CD8-positive, alpha-beta memory T cell (primary cell): ENCODE measurements at regions of chr1 and their contacts with region 1.

Region 1: DNA sequence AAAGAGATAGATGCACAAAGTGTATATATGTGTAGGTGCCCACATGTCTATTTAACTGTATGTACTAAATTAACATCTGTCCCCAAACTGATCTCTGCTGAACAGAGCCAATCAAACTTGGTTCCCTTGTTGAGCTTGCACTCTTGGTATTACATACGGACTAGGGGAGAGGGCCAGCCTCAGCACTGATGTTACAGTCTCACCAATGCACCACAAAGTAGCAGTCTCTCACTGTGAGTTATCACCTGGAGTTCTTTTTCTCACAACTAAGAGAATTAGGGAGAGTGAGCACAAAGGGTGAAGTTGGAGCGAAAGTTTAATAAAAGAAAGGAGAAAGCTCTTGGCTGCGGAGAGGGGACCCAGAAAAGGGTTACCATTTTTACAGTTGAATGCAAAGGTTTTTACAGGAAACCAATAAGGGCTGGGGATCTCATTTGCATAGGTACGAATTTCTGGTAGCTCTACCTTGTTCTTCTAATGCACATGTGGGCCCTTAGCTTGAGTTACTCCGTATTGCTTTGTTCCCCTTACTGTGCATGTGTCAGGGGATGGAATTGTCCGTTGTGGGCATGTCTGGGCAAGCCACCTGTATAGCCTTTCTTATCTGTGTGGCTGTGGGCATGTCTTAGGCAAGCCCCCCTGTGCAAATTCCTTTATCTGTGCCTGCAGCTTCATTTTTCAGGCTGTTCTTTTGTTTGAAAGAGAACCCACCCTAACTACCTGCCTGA is 13.3 kb upstream of the CHI3L2 start:
- DNase-seq: no peak
- H3K4me3 ChIP-seq: peak overlapping the region; percentile 46
- H3K4me3 Mint-ChIP-seq: peak overlapping the region; percentile 63 to 77 (median 70)
- H3K27ac ChIP-seq: no peak overlapping the region
- H3K27ac Mint-ChIP-seq: peak overlapping the region; percentile 95 to 99 (median 97)
- H3K4me1 ChIP-seq: peaks cover 67% of the 10 kb centered on the region
- H3K4me1 Mint-ChIP-seq: peaks cover 66 to 86% (median 79%) of the 10 kb centered on the region in 3 donors
- H3K27me3 ChIP-seq: no peaks in the 10 kb centered on the region
- H3K27me3 Mint-ChIP-seq: peaks cover 0 to 4% of the 10 kb centered on the region in 2 donors

Region 2: DNA sequence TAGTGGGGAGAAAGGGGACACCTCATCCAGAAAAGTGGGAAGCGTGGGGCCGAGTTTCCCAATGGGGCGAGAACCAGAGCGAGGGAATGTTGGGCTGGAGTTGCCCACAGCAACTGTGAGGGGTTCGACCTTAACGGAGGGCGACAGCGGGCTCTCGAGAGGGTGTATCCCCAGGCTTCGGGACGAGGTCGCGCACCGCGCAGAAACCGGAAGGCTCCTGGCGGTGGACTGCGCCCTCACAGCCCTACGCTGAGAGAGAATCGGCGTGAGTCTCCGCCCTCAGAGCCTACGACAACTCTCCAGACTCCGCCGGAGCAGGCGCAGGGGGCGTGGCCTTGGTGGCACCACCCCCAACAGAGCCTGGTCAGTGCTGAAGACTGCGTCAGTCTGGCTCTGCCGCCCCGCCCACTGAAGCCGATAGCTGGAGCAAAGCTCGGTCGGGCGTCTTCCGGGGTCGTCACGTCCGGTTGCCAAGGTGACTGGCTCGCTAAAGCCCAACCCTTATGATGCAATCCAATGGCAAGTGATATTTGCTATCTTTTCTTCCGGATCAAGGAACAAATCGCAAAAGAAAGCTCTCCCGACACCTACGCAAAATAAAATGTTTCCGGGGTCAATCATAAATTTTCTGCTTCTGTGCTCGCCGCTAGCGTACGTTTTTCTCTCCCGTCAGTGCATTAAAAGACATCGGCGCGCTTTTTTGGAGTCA is 250.4 kb before region 1 on chr1 and contains the start of gene LRIF1:
- CTCF ChIA-PET with region 1: no interaction called
- POLR2A ChIA-PET with region 1: interaction called, 11 read pairs
- DNase-seq: peak; percentile 100
- H3K4me3 ChIP-seq: peak within 1 kb of the TSS; percentile 80
- H3K4me3 Mint-ChIP-seq: peak within 1 kb of the TSS; percentile 81 to 97 (median 89)
- H3K27ac ChIP-seq: peak within 1 kb of the TSS; percentile 99
- H3K27ac Mint-ChIP-seq: peak within 1 kb of the TSS; percentile 94 to 99 (median 98)
- H3K4me1 ChIP-seq: peaks cover 23% of the 10 kb centered on the region
- H3K4me1 Mint-ChIP-seq: peaks cover 41 to 50% (median 43%) of the 10 kb centered on the region in 3 donors
- H3K27me3 ChIP-seq: peaks cover 4% of the 10 kb centered on the region
- H3K27me3 Mint-ChIP-seq: peaks cover 13 to 14% of the 10 kb centered on the region in 2 donors
- total RNA-seq, gene LRIF1: 14.1 to 15.6 TPM

Region 3: DNA sequence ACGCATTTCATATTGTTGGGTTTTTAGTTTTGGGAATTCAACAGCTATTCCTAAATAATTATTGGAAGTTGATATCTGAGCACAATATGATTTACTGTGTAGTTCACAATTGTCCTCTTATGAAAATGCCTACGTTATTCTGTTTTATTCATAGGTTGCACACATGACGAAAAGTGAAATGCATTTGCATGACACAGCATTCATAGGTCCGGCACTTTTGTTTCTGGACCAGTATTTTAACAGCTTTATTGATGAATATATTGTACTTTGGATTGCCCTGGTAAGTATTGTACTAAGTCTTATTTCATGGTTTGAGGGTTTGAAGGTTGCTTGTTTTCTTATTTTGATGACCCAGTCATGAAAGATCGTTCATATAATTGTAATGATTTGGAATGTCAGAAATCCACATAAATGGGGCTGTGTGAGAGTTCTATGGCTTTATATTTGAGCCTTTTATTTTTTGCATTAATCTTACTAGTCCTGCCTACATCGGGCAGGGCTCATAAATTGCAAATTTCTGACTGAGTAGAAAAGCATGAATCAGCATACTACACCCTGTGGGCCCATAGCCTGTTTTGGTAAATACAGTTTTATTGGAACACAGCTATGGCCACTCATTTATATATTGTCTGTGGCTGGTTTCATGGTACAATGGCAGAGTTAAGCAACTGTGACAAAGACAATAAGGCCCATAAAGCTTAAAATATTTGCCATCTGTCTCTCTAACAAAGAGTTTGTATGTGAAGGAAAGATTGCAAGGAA is 30.7 kb before region 1 on chr1:
- CTCF ChIA-PET with region 1: interaction called, 5 read pairs
- POLR2A ChIA-PET with region 1: interaction called, 10 read pairs
- DNase-seq: no peak
- H3K4me3 ChIP-seq: no peak overlapping the region
- H3K4me3 Mint-ChIP-seq: no peak overlapping the region
- H3K27ac ChIP-seq: no peak overlapping the region
- H3K27ac Mint-ChIP-seq: peak overlapping the region; percentile 10 to 90 (median 48)
- H3K4me1 ChIP-seq: peaks cover 33% of the 10 kb centered on the region
- H3K4me1 Mint-ChIP-seq: peaks cover 70 to 95% (median 90%) of the 10 kb centered on the region in 3 donors
- H3K27me3 ChIP-seq: no peaks in the 10 kb centered on the region
- H3K27me3 Mint-ChIP-seq: no peaks in the 10 kb centered on the region